OCI-LY7 (cell line): ENCODE measurements at regions of chr5 and their contacts with region 1.

Region 1: DNA sequence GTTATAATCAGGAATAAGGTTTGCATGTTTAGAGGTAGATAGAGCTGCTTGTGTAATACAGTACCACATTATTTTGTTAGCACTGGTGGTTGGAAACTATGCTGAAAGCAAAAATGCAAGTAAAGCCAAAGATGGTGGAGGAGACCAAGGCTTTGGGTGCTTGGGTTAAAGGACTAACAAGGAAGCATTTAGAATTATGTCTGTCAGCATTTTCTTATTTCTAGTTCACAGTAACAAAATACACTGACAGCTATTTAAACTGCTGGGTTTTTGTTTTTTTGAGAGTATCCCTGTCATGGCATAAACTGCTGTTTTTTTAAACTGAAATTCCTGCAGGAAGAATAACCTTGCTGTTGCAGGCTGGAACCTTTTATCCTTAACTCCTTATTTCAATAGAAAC is 6.5 kb downstream of the HMGXB3 start:
- DNase-seq: no peak
- H3K4me3 ChIP-seq: no peak overlapping the region
- H3K27ac ChIP-seq: no peak overlapping the region
- H3K4me1 ChIP-seq: peaks cover 11% of the 10 kb centered on the region
- CTCF ChIP-seq: no peak

Region 2: GRCh38 chr5:150024346-150024984 is 17.4 kb after region 1 on chr5:
- CTCF ChIA-PET with region 1: interaction called, 4 read pairs
- POLR2A ChIA-PET with region 1: interaction called, 10 read pairs
- intact Hi-C with region 1: no loop called
- DNase-seq: no peak
- H3K4me3 ChIP-seq: no peak overlapping the region
- H3K27ac ChIP-seq: no peak overlapping the region
- H3K4me1 ChIP-seq: no peaks in the 10 kb centered on the region
- CTCF ChIP-seq: no peak